ENCODE measurements at regions of chr13 and their contacts with region 1.

Region 1: GRCh38 chr13:41222259-41222852 is 28.0 kb upstream of the KBTBD7 start:
- DNase-seq: peak; percentile 72
- H3K4me3 ChIP-seq: no peak overlapping the region
- H3K27ac ChIP-seq: no peak overlapping the region
- H3K4me1 ChIP-seq: no peaks in the 10 kb centered on the region
- H3K27me3 ChIP-seq: no peaks in the 10 kb centered on the region
- CTCF ChIP-seq: peak; percentile 58 to 67
- POLR2A ChIP-seq: no peak

Region 2: GRCh38 chr13:40874138-40874779 is 348.1 kb before region 1 on chr13:
- CTCF ChIA-PET with region 1: no interaction called
- POLR2A ChIA-PET with region 1: no interaction called
- dilution Hi-C with region 1: no loop called
- intact Hi-C with region 1: no loop called
- DNase-seq: no peak
- H3K4me3 ChIP-seq: no peak overlapping the region
- H3K27ac ChIP-seq: no peak overlapping the region
- H3K4me1 ChIP-seq: no peaks in the 10 kb centered on the region
- H3K27me3 ChIP-seq: no peaks in the 10 kb centered on the region
- CTCF ChIP-seq: no peak
- POLR2A ChIP-seq: no peak

Region 3: DNA sequence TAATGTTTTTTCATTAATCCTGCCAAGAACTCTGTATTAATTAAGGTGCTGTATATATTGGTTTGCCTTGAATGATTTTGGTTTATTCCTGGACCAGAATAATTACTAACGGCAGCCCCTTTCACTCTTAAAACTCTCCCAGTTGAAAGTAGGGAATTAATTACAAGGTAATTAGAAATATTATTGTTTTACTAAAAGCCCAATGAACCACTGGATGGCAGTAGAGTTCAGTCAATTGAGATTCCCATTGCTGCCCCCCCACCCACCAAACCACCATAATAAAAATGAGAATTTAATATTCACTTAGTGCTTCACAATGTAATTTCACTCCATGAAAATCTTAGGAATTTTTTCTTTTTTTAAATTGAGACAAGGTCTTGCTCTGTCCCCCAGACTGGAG is 147.3 kb before region 1 on chr13:
- CTCF ChIA-PET with region 1: interaction called, 37 read pairs
- POLR2A ChIA-PET with region 1: no interaction called
- dilution Hi-C with region 1: no loop called
- intact Hi-C with region 1: loop called (anchors 1 kb)
- DNase-seq: peak; percentile 51
- H3K4me3 ChIP-seq: no peak overlapping the region
- H3K27ac ChIP-seq: peak overlapping the region; percentile 2
- H3K4me1 ChIP-seq: peaks cover 9% of the 10 kb centered on the region
- H3K27me3 ChIP-seq: no peaks in the 10 kb centered on the region
- CTCF ChIP-seq: peak; percentile 31 to 33
- POLR2A ChIP-seq: no peak

Region 4: GRCh38 chr13:41085961-41086585 is 136.3 kb before region 1 on chr13:
- CTCF ChIA-PET with region 1: interaction called, 10 read pairs
- POLR2A ChIA-PET with region 1: no interaction called
- dilution Hi-C with region 1: no loop called
- intact Hi-C with region 1: no loop called
- DNase-seq: no peak
- H3K4me3 ChIP-seq: no peak overlapping the region
- H3K27ac ChIP-seq: no peak overlapping the region
- H3K4me1 ChIP-seq: no peaks in the 10 kb centered on the region
- H3K27me3 ChIP-seq: no peaks in the 10 kb centered on the region
- CTCF ChIP-seq: no peak
- POLR2A ChIP-seq: no peak

Region 5: DNA sequence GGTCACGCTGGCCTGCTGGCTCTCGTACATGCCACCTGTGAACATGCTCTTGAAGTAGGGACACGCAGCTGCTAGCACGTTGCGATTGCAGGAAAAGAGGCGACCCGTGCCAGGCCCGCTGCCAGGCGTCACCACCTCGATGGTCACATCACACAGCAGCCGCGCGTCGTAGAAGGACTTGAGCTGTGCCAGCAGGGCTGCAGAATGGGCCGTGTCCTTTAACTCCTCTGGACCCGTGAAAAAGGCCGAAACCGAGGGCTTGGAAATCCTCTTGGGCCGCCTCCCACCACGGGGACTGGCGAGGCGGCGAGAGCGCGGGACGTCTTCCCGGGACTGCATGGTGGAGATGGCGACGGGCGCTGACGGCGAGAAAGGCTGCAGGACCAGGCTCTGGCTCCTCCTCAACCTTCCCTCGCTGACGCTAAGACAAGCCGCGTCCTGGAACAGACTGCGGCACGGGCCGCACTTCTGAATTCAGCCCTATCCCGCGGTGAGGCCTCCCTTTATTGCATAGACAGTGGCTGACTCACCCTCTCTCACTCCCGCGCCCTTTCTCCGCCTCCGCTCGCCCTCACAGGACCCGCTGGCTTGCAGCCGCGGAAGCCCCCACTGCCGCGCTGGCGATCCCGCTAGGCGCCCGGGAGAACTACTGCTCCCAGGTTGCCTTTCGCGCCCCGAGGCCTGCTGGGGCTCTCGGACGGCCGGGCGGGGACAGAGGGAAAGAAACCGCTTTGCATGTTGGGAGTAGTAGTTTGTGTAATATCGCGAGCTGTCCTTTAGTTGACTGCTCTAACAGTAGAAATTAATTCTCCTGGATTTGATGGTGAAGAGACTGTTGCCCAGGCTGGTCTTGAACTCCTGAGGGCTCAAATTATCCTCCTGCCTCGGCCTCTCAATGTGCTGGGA is 28.2 kb before region 1 on chr13 and contains the start of gene KBTBD7:
- CTCF ChIA-PET with region 1: interaction called, 10 read pairs
- POLR2A ChIA-PET with region 1: no interaction called
- dilution Hi-C with region 1: no loop called
- intact Hi-C with region 1: no loop called
- DNase-seq: peak; percentile 99
- H3K4me3 ChIP-seq: peak within 1 kb of the TSS; percentile 48 to 60 (median 53)
- H3K27ac ChIP-seq: peak within 1 kb of the TSS; percentile 78
- H3K4me1 ChIP-seq: peaks cover 4% of the 10 kb centered on the region
- H3K27me3 ChIP-seq: no peaks in the 10 kb centered on the region
- CTCF ChIP-seq: no peak
- POLR2A ChIP-seq: peak; percentile 80
- total RNA-seq, gene KBTBD7: 3.1 and 4.4 TPM in 2 replicates

Measured in endothelial cell of umbilical vein (primary cell).